Upper lobe of right lung (tissue), 1 donor: ENCODE measurements at regions of chr6 and their contacts with region 1.

Region 1: DNA sequence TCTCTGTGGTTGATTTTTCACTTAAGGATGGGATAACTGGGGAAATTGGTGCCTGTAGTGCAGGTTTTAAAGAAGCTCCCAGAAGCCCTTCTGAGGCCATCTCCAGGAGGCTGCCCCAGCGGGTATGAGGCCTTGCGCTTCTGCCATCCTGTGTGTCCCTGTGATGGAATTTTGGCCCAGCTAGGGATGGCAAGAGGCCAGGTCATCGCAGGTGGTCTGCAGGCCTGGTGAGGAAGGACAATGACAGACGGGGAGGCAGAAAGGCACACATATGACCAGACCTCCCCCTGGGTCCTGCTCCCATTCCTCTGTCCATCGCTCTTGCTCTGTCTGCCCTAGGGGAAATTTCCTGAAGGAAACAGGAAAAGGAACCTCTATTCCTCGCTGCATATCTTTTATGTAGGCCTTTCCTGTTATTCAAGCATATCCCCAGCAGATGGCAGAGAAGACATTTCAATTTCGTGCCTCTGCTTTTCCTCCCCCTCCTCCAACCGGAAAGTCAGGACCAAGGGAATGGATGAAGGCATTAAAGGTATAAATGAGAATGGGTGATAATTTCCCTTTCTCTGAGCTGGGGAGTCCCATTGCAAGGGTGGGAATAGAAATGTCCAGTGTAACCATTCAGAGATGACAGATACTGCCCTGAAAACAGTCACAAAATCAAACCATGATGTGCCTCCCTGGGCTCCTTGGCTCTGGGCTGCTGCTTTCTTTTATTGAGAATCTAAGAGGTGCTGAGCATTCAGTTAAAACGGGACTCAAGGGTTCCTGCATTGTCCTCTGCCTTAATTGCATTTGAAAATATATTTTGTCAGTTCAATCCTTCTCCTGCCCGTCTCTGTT is 17.6 kb upstream of the HLA-F start:
- DNase-seq: no peak
- ATAC-seq: peak; percentile 78
- H3K4me3 ChIP-seq: no peak overlapping the region
- H3K27ac ChIP-seq: no peak overlapping the region
- H3K4me1 ChIP-seq: no peaks in the 10 kb centered on the region
- H3K27me3 ChIP-seq: peaks cover 6% of the 10 kb centered on the region
- CTCF ChIP-seq: peak; percentile 67

Region 2: DNA sequence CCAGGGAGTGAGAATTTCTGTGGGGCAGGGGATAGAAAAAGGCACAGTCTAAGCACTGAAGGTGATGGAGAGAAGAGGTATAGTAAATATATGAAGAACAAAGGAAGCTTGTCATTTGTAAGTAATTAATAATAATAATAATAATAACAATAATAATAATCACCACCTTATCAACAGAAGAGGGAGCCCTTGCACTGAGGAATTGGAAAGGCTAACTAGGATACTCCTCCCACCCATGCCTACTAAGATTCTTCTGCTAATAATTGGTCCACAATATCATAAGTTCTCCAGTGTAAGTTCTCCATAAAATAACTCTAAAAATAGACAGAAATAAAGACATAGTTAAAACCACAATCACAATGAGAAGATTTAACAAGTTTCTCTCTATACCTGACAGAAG is 329.6 kb before region 1 on chr6:
- intact Hi-C with region 1: no loop called
- DNase-seq: no peak
- ATAC-seq: no peak
- H3K4me3 ChIP-seq: no peak overlapping the region
- H3K27ac ChIP-seq: no peak overlapping the region
- H3K4me1 ChIP-seq: no peaks in the 10 kb centered on the region
- H3K27me3 ChIP-seq: no peaks in the 10 kb centered on the region
- CTCF ChIP-seq: no peak

Region 3: GRCh38 chr6:29834564-29835436 is 129.2 kb after region 1 on chr6:
- intact Hi-C with region 1: loop called (anchors 5 kb)
- DNase-seq: no peak
- ATAC-seq: peak; percentile 86
- H3K4me3 ChIP-seq: no peak overlapping the region
- H3K27ac ChIP-seq: no peak overlapping the region
- H3K4me1 ChIP-seq: no peaks in the 10 kb centered on the region
- H3K27me3 ChIP-seq: peaks cover 60% of the 10 kb centered on the region
- CTCF ChIP-seq: peak; percentile 92